Posterior vena cava (tissue), 2 donors: ENCODE measurements at regions of chrX and their contacts with region 1.

Region 1: DNA sequence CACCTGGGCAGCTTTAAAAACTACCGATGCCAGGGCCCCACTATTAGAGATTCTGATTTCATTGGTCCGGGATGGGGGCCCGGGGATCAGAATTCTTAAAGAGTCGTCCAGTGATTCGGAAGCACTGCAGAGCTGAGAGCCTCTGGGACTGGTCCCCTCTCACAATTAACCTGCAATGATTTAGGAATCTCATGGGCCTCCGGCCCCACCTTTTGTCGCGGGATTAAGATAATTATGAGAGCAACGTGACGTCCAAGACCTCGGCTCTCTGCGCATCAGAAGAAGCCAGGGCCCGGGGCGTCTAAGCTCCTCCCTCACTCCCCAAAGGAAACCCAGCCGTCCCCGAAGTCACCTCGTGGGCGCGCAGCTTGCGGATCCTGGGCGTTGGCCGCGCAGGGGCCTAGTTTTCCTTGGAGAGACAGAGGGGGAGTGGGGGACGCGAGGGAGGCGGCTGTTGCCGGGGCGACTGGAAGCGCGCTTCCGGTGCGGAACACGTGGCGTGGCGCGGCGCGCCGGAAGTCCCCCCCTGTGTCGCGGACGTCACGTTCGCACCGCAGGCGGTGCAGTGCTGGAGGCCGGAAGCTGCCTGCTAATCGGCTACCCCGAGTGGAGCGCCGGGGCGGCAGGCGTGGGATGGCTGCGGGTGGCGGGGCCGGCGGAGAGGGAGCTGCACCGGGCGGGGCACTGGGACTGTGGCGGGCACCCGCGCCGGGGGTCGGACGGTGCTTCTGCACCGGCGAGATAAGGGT is at the start of gene GEMIN8:
- DNase-seq: peak; percentile 97
- total RNA-seq, gene GEMIN8: 12.5 to 13.7 TPM

Region 2: DNA sequence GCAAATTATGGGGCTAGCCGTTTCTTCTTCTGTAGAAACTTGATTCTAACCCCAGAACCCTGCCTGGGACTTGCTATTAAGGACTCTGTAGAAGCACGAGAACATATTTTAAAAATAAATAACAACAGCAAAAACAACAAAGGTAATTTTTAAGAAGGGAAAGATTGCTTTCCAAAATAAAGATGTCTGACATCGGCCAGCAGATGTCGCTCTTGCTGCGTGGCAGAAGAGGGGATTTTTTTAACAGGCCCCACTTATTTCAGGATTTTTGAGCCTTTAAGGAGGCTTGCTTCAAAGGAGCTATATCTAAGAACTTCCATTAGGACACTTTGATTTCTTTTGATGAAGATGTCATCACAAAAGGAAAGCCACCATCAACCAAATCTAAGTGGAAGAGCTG is 523.0 kb before region 1 on chrX:
- intact Hi-C with region 1: loop called in 1 of 2 experiments (anchors 10 kb)
- DNase-seq: peak; percentile 81

Region 3: DNA sequence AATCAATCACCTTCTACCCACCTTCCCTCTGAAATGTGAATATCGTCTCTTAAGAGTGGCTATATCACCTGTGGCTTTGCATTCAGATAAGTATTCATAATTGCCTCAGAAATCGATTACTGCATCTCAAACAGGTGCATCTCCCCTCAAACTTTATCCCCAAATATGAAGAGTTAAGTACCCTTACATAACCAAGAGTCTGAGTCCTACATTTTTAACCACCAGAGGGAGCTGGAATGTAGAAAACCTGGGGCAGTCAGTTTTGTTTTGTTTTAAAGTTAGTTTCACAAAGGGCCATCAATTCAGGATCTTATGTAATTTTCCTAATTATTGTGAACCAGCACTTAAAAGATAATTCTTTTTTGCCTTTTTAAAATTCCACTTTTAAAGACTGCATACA is 371.0 kb before region 1 on chrX:
- intact Hi-C with region 1: loop called in 1 of 2 experiments (anchors 5 kb)
- DNase-seq: no peak

Region 4: GRCh38 chrX:13994104-13994503 is 35.5 kb before region 1 on chrX:
- intact Hi-C with region 1: no loop called
- DNase-seq: no peak